ENCODE measurements at regions of chr3 and their contacts with region 1.

Region 1: GRCh38 chr3:127672516-127673190 is at the start of gene ABTB1:
- DNase-seq: peak; percentile 78 to 91 (median 83)
- H3K4me3 ChIP-seq: peak within 1 kb of the TSS; percentile 83
- H3K4me3 Mint-ChIP-seq: peak within 1 kb of the TSS; percentile 88 to 96 (median 91)
- H3K27ac ChIP-seq: peak within 1 kb of the TSS; percentile 83
- H3K27ac Mint-ChIP-seq: peak within 1 kb of the TSS; percentile 93 to 98 (median 96)
- H3K4me1 ChIP-seq: peaks cover 16% of the 10 kb centered on the region
- H3K4me1 Mint-ChIP-seq: peaks cover 26 to 43% (median 27%) of the 10 kb centered on the region in 3 donors
- H3K27me3 ChIP-seq: no peaks in the 10 kb centered on the region
- H3K27me3 Mint-ChIP-seq: peaks cover 0 to 2% of the 10 kb centered on the region in 2 donors
- total RNA-seq, gene ABTB1: 21.7 to 23.1 TPM

Region 2: DNA sequence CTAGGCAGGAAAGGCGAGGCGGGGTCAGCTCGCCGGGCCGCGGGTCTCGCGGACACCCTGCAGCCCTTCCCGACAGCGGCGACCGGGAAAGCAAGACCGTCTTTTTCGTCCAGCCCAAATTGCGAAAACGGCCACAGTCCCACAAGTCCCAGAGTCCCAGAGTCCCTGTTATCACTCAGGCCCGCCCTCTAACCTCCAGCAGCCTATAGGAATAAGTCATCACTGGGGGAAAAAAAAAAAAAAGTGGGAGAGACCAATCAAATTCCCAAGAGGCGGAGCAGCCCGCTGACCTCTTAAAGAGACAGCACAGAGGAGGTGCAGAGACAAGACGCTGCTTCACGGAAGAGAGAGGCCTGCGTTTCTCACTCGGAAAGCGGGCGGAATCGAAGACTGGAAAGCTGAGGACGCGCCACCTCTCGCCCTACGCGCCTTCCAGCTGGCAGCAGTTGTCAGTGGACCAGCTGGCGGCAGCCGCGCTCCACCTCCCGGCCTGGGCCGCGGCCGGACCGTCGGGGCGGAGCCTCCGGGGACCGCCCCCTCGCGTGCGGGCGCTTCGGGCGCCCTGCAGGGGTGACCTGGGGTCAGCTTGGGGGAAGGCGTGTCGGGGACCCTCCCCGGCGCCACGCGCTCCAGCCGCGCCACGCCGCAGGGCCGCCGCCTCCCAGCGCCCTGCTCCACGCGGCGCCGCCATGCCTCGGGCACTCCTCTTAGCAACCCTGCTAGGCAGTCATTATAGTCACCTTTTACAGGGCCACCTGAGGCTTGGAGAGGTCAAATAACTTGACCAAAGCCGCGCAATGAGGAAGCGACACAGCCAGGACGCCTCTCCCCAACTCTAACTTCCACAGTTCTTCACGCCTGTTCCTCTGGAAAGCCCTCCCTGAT is 81.8 kb before region 1 on chr3 and contains the start of gene TPRA1:
- CTCF ChIA-PET with region 1: no interaction called
- POLR2A ChIA-PET with region 1: interaction called, 13 read pairs
- DNase-seq: peak; percentile 61 to 89 (median 86)
- H3K4me3 ChIP-seq: peak within 1 kb of the TSS; percentile 69
- H3K4me3 Mint-ChIP-seq: peak within 1 kb of the TSS; percentile 95 to 99 (median 97)
- H3K27ac ChIP-seq: peak within 1 kb of the TSS; percentile 64
- H3K27ac Mint-ChIP-seq: peak within 1 kb of the TSS; percentile 77 to 98 (median 95)
- H3K4me1 ChIP-seq: peaks cover 17% of the 10 kb centered on the region
- H3K4me1 Mint-ChIP-seq: peaks cover 25 to 49% (median 41%) of the 10 kb centered on the region in 3 donors
- H3K27me3 ChIP-seq: no peaks in the 10 kb centered on the region
- H3K27me3 Mint-ChIP-seq: no peaks in the 10 kb centered on the region
- total RNA-seq, gene TPRA1: 48.9 to 52.1 TPM

Measured in CD8-positive, alpha-beta memory T cell (primary cell).